Activated CD4-positive, alpha-beta T cell treated with anti-CD3 and anti-CD28 coated beads for 36 hours (primary cell): ENCODE measurements at regions of chr5 and their contacts with region 1.

Region 1: GRCh38 chr5:154754460-154755360 is 467 bp upstream of the LARP1 start:
- DNase-seq: peak; percentile 100
- ATAC-seq: peak; percentile 89
- H3K4me3 Mint-ChIP-seq: peak overlapping the region; percentile 88
- H3K27ac Mint-ChIP-seq: peak overlapping the region; percentile 99
- H3K4me1 Mint-ChIP-seq: peaks cover 33% of the 10 kb centered on the region
- H3K27me3 Mint-ChIP-seq: no peaks in the 10 kb centered on the region

Region 2: GRCh38 chr5:154038707-154039457 is 715.8 kb before region 1 on chr5 and contains the starts of genes FAM114A2 and MFAP3:
- CTCF ChIA-PET with region 1: no interaction called
- POLR2A ChIA-PET with region 1: no interaction called
- intact Hi-C with region 1: loop called in 1 of 2 experiments (anchors 2 kb)
- DNase-seq: peak; percentile 94
- ATAC-seq: peak; percentile 99
- H3K4me3 Mint-ChIP-seq: peak within 1 kb of the TSS; percentile 100
- H3K27ac Mint-ChIP-seq: peak within 1 kb of the TSS; percentile 92
- H3K4me1 Mint-ChIP-seq: peaks cover 55% of the 10 kb centered on the region
- H3K27me3 Mint-ChIP-seq: no peaks in the 10 kb centered on the region
- total RNA-seq, gene FAM114A2: 27.9 to 28.5 TPM
- total RNA-seq, gene MFAP3: 13.2 to 13.5 TPM

Region 3: GRCh38 chr5:154214371-154215106 is 540.2 kb before region 1 on chr5:
- CTCF ChIA-PET with region 1: no interaction called
- POLR2A ChIA-PET with region 1: no interaction called
- intact Hi-C with region 1: loop called in 1 of 2 experiments (anchors 5 kb)
- DNase-seq: no peak
- ATAC-seq: peak; percentile 93
- H3K4me3 Mint-ChIP-seq: peak overlapping the region; percentile 34
- H3K27ac Mint-ChIP-seq: peak overlapping the region; percentile 87
- H3K4me1 Mint-ChIP-seq: peaks cover 51% of the 10 kb centered on the region
- H3K27me3 Mint-ChIP-seq: no peaks in the 10 kb centered on the region

Region 4: DNA sequence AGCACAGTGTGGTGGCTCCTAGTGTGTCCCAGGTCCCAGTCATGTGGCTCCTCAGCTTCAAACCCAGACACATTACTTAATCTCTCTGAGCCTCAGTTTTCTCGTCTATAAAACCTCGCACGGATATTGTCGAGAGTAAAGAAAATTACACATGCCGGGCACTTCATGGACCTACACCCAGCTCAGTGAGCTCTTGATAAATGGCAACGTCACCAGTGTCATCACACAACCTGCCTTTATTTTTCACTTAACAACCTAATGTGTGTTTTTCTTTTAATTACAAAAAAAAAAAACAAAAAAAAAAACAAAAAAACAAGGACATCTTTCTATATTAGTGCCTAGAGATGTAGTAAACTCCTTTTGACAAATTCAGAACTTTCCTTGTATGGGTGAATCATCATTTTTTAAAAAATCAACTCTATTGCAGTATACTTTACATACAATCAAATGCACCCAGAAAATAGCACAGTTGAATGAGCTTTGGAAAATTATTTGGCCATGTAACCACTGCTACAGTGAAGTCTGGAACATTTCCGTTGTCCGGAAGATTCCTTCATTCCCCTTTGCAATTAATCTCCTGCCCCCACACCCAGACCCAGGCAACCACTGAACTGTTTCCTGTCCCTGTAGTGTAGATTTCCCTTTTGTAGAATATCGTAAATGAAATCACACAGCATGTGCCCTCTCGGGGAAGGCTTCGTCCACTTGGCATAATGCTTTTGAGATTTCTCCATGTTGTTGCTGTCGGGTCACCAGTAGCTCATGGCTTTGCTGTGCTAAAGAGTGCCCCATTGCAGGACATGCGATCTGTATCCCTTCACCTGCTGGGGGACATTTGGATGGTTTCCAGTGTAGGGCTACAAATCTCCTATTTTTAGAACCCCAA is 100.0 kb before region 1 on chr5:
- CTCF ChIA-PET with region 1: interaction called, 7 read pairs
- POLR2A ChIA-PET with region 1: no interaction called
- intact Hi-C with region 1: loop called in 1 of 2 experiments (anchors 5 kb)
- DNase-seq: no peak
- ATAC-seq: no peak
- H3K4me3 Mint-ChIP-seq: no peak overlapping the region
- H3K27ac Mint-ChIP-seq: no peak overlapping the region
- H3K4me1 Mint-ChIP-seq: peaks cover 5% of the 10 kb centered on the region
- H3K27me3 Mint-ChIP-seq: no peaks in the 10 kb centered on the region

Region 5: GRCh38 chr5:154664869-154665268 is 89.8 kb before region 1 on chr5:
- CTCF ChIA-PET with region 1: no interaction called
- POLR2A ChIA-PET with region 1: no interaction called
- intact Hi-C with region 1: no loop called
- DNase-seq: no peak
- ATAC-seq: no peak
- H3K4me3 Mint-ChIP-seq: no peak overlapping the region
- H3K27ac Mint-ChIP-seq: no peak overlapping the region
- H3K4me1 Mint-ChIP-seq: no peaks in the 10 kb centered on the region
- H3K27me3 Mint-ChIP-seq: no peaks in the 10 kb centered on the region

Region 6: DNA sequence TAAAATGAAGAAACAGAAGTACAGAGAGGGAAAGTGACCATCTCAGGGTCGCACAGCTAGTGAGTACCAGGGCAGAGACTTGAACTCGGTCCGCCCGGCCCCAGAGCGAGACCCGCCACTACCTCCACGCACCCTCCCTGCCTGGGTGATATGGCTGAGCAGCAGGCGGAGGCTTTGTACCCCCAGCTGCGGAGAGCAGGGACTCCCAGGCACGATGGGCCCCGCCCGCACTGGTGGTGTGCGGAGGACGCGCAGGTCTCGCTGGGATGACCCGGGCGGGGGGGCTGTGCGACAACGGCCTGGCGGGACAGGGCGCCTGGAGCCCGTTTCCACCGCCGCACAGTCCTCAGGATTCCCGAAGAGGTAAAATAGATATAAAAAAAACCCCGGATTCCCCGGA is 64.2 kb before region 1 on chr5:
- CTCF ChIA-PET with region 1: no interaction called
- POLR2A ChIA-PET with region 1: no interaction called
- intact Hi-C with region 1: no loop called
- DNase-seq: no peak
- ATAC-seq: no peak
- H3K4me3 Mint-ChIP-seq: no peak overlapping the region
- H3K27ac Mint-ChIP-seq: no peak overlapping the region
- H3K4me1 Mint-ChIP-seq: no peaks in the 10 kb centered on the region
- H3K27me3 Mint-ChIP-seq: peaks cover 14% of the 10 kb centered on the region

Region 7: GRCh38 chr5:154811653-154812365 is 57.1 kb after region 1 on chr5:
- CTCF ChIA-PET with region 1: no interaction called
- POLR2A ChIA-PET with region 1: no interaction called
- intact Hi-C with region 1: loop called (anchors 1 to 5 kb)
- DNase-seq: peak; percentile 81
- ATAC-seq: peak; percentile 87
- H3K4me3 Mint-ChIP-seq: no peak overlapping the region
- H3K27ac Mint-ChIP-seq: peak overlapping the region; percentile 58
- H3K4me1 Mint-ChIP-seq: peaks cover 24% of the 10 kb centered on the region
- H3K27me3 Mint-ChIP-seq: no peaks in the 10 kb centered on the region

Region 8: GRCh38 chr5:154857530-154858296 is 103.0 kb after region 1 on chr5:
- CTCF ChIA-PET with region 1: no interaction called
- POLR2A ChIA-PET with region 1: interaction called, 5 read pairs
- intact Hi-C with region 1: loop called (anchors 1 kb)
- DNase-seq: peak; percentile 90
- ATAC-seq: peak; percentile 59
- H3K4me3 Mint-ChIP-seq: peak overlapping the region; percentile 99
- H3K27ac Mint-ChIP-seq: peak overlapping the region; percentile 98
- H3K4me1 Mint-ChIP-seq: peaks cover 34% of the 10 kb centered on the region
- H3K27me3 Mint-ChIP-seq: no peaks in the 10 kb centered on the region

Region 9: GRCh38 chr5:155064580-155064979 is 309.9 kb after region 1 on chr5:
- CTCF ChIA-PET with region 1: no interaction called
- POLR2A ChIA-PET with region 1: no interaction called
- intact Hi-C with region 1: no loop called
- DNase-seq: no peak
- ATAC-seq: no peak
- H3K4me3 Mint-ChIP-seq: no peak overlapping the region
- H3K27ac Mint-ChIP-seq: no peak overlapping the region
- H3K4me1 Mint-ChIP-seq: no peaks in the 10 kb centered on the region
- H3K27me3 Mint-ChIP-seq: peaks cover 9% of the 10 kb centered on the region

Region 10: GRCh38 chr5:155082401-155082800 is 327.7 kb after region 1 on chr5:
- CTCF ChIA-PET with region 1: no interaction called
- POLR2A ChIA-PET with region 1: no interaction called
- intact Hi-C with region 1: no loop called
- DNase-seq: no peak
- ATAC-seq: no peak
- H3K4me3 Mint-ChIP-seq: no peak overlapping the region
- H3K27ac Mint-ChIP-seq: no peak overlapping the region
- H3K4me1 Mint-ChIP-seq: no peaks in the 10 kb centered on the region
- H3K27me3 Mint-ChIP-seq: peaks cover 9% of the 10 kb centered on the region